ENCODE measurements at regions of chr5 and their contacts with region 1.

Region 1: DNA sequence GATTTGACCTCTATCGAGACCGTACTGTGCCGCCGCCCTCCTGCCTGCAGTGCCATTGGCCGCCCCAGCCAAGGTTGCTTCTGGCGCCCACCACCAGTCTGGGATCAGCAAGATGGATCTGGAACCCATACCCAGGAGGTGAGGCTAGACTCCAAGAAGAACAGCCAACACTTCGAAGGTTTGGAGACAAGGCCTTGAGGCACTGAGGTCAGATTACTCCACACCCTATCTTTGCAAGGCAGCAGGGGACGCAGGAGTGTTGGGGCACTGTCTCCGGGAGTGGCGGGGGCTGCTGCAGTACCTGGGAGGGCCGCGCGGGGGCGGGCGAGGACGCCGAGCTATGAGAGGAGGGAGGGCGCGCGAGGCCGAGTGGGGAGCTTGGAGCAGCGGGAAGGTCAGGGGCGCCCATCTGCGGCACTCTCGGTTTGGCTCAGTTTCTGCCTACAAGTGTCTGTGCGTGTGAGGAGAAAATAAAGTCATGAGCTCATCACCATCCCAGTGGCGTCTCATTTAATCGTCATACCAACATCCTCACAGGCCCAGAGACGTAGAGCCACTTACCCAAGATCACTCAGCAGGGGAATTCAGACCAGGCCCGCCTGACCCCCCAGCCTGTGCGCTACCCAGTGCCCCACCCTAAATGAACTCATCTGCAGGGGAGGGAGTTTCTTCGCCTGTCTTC is 20.5 kb upstream of the PSD2 start:
- DNase-seq: no peak
- ATAC-seq: peak; percentile 98
- H3K4me3 ChIP-seq: no peak overlapping the region
- H3K27ac ChIP-seq: no peak overlapping the region
- H3K4me1 ChIP-seq: peaks cover 7% of the 10 kb centered on the region; the same call in 1 of the 2 replicates
- H3K27me3 ChIP-seq: peaks cover 0 to 3% of the 10 kb centered on the region in 2 experiments; a peak in 1 of 4 replicates
- CTCF ChIP-seq: peak; percentile 78 to 98 (median 90)
- EP300 ChIP-seq: no peak
- POLR2A ChIP-seq: no peak
- RAD21 ChIP-seq: peak; percentile 47

Region 2: DNA sequence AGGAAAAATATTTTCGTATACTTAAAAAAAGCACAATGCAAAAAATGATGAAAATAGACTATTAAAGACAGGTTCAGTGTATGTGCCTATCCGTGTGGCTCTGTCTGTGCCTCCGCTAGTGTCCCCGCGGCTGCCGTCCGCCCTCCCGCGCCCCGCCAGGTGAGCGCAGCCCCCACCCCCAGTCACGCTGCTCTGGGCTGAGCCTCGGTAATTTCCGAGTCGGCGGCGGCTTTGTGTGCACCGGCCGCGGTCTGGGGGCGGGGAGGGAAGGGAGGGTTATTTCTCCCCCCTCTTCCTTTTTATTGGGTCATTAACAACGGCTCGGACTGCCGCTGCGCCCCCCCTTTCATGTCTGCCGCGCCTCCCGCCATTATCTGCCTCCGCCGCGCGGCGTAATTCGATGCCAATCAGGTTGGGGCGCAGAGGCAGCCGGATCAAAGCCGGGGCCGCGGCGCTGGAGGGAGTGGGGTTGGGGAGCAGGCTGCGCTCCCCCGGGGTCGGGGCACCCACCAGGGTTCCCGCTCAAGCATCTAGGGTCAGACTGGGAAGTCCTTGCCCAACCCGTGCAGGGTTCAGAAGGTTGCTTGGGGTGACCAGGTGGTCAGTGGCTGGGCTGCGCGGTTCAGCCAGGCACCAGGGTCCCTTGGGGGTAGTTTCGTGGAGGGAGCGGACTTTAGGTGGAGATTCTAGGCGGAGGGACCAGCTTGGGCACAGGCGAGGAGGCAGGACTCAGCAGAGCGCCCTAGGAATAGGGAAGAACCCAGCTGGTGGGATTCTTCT is 19.0 kb before region 1 on chr5:
- CTCF ChIA-PET with region 1: interaction called, 10 read pairs
- POLR2A ChIA-PET with region 1: no interaction called
- RAD21 ChIA-PET with region 1: no interaction called
- SMC1A ChIA-PET with region 1: no interaction called
- in situ Hi-C with region 1: no loop called
- intact Hi-C with region 1: no loop called
- DNase-seq: no peak
- ATAC-seq: peak; percentile 80
- H3K4me3 ChIP-seq: peak overlapping the region; percentile 49; the same call in 1 of the 2 replicates
- H3K27ac ChIP-seq: no peak overlapping the region
- H3K4me1 ChIP-seq: no peaks in the 10 kb centered on the region; the same call in 1 of the 2 replicates
- H3K27me3 ChIP-seq: peaks cover 4 to 13% of the 10 kb centered on the region in 2 experiments; a peak in 3 of 4 replicates
- CTCF ChIP-seq: no peak
- EP300 ChIP-seq: no peak
- POLR2A ChIP-seq: no peak
- RAD21 ChIP-seq: no peak

Region 3: GRCh38 chr5:139831624-139832023 is 56.5 kb after region 1 on chr5:
- CTCF ChIA-PET with region 1: no interaction called
- POLR2A ChIA-PET with region 1: no interaction called
- RAD21 ChIA-PET with region 1: no interaction called
- SMC1A ChIA-PET with region 1: no interaction called
- in situ Hi-C with region 1: no loop called
- intact Hi-C with region 1: no loop called
- DNase-seq: no peak
- ATAC-seq: no peak
- H3K4me3 ChIP-seq: no peak overlapping the region
- H3K27ac ChIP-seq: no peak overlapping the region
- H3K4me1 ChIP-seq: no peaks in the 10 kb centered on the region
- H3K27me3 ChIP-seq: no peaks in the 10 kb centered on the region; a peak in 1 of 4 replicates
- CTCF ChIP-seq: no peak
- EP300 ChIP-seq: no peak
- POLR2A ChIP-seq: no peak
- RAD21 ChIP-seq: no peak

Region 4: GRCh38 chr5:139844472-139845145 is 69.5 kb after region 1 on chr5:
- CTCF ChIA-PET with region 1: interaction called, 14 read pairs
- POLR2A ChIA-PET with region 1: interaction called, 3 read pairs
- RAD21 ChIA-PET with region 1: interaction called, 10 read pairs
- SMC1A ChIA-PET with region 1: interaction called, 3 read pairs
- in situ Hi-C with region 1: no loop called
- intact Hi-C with region 1: no loop called
- DNase-seq: peak; percentile 23
- ATAC-seq: peak; percentile 82
- H3K4me3 ChIP-seq: no peak overlapping the region
- H3K27ac ChIP-seq: no peak overlapping the region
- H3K4me1 ChIP-seq: peaks cover 12% of the 10 kb centered on the region
- H3K27me3 ChIP-seq: no peaks in the 10 kb centered on the region; a peak in 1 of 4 replicates
- CTCF ChIP-seq: peak; percentile 85 to 93 (median 89)
- EP300 ChIP-seq: no peak
- POLR2A ChIP-seq: no peak
- RAD21 ChIP-seq: peak; percentile 82

Measured in GM12878 (cell line).